Posterior vena cava (tissue), 2 donors: ENCODE measurements at regions of chr12 and their contacts with region 1.

Region 1: DNA sequence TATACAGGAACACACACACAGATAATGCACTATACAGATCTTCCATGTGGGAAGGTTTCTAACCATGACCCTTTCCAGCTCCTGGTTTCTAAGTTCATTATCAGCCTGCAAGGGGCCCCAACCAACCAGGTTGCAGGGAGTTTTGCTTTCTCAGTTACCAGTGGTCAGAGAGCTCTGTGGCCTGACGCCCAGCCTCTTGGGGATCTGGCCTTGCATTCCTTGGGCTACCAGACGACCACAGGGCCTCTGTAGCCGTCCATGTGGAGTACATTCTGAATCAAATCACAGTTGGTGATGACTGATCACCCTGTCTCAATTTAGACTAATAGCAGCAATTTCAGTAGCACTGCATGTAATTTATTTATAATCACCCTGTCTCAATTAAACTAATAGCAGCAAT is 47.5 kb downstream of the PAH start:
- DNase-seq: no peak

Region 2: GRCh38 chr12:103877934-103878510 is 1008.5 kb after region 1 on chr12:
- intact Hi-C with region 1: loop called in 1 of 2 experiments (anchors 10 kb)
- DNase-seq: no peak